Right cardiac atrium (tissue), 5 donors: ENCODE measurements at regions of chr14 and their contacts with region 1.

Region 1: GRCh38 chr14:44897045-44897844 is 64.5 kb downstream of the KLHL28 start:
- DNase-seq: peak; percentile 98 to 100 (median 99)
- ATAC-seq: peak; percentile 99 to 100
- H3K4me3 ChIP-seq: peak overlapping the region; percentile 95
- H3K27ac ChIP-seq: peak overlapping the region; percentile 100
- H3K4me1 ChIP-seq: no peaks in the 10 kb centered on the region
- H3K27me3 ChIP-seq: no peaks in the 10 kb centered on the region

Region 2: DNA sequence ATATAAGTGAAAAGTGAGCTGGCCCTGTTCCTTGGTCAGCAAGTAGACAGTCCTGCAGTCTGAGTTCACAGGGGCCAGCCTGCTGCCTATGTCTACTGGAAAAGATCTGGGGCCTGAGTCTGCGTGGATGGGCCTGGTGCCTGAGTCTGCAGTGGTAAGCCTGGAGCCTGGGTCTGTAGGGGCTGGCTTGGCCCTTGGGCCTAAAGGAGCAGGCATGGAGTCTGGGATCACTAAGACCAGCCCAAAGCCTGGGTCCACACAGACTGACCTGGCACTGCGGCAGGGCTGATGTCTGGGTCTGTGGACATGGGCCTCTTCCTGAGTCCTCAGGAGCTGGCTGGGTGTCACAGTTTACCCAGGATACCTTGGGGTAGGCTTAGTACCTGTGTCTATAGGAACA is 30.9 kb before region 1 on chr14:
- intact Hi-C with region 1: no loop called
- DNase-seq: peak in 1 of 3 donors; percentile 50
- ATAC-seq: no peak
- H3K4me3 ChIP-seq: no peak overlapping the region
- H3K27ac ChIP-seq: no peak overlapping the region
- H3K4me1 ChIP-seq: no peaks in the 10 kb centered on the region
- H3K27me3 ChIP-seq: no peaks in the 10 kb centered on the region

Region 3: DNA sequence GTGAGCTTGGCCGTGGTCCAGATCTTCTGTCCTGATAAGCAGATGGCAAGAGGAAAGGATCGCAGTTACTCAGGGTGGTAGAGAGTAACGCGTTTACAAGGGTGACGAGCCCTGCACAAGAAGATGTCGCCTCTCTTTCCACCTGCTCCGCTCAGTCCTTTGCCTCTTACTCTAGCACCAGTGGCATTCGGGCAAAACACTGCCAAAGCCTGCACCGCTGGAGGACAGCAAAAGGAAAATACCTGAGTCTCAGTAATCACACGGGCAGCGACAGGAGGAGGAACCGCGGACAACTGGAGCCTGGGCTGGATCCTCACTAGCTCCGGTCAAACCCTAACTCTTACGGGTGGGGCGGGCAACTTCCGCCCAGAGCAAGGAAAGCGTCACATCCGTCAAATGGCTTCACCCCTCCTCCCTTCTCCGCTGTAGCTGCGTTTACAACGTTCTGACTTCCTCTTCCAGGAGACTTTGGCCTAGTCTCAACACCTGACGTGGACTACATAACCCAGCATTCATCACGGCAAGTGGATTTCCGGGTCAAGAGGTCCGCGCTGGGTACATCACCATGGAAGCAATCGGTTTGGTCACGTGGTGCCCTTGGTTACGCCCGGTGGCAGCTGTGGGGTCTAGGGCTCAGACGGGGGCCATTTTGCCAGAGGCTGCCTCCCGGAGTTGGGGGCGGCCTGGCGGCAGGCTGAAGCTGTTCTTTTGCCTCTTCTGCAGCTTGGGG is 64.5 kb after region 1 on chr14 and contains the starts of genes KLHL28 and TOGARAM1:
- intact Hi-C with region 1: loop called in 1 of 4 experiments (anchors 5 kb)
- DNase-seq: peak; percentile 96 to 98 (median 96)
- ATAC-seq: peak; percentile 98
- H3K4me3 ChIP-seq: peak within 1 kb of the TSS; percentile 89
- H3K27ac ChIP-seq: peak within 1 kb of the TSS; percentile 96
- H3K4me1 ChIP-seq: no peaks in the 10 kb centered on the region
- H3K27me3 ChIP-seq: no peaks in the 10 kb centered on the region
- total RNA-seq, gene KLHL28: 9.4 to 13.0 (median 12.3) TPM
- total RNA-seq, gene TOGARAM1: 18.4 to 26.0 (median 19.6) TPM